ENCODE measurements at regions of chr22 and their contacts with region 1.

Region 1: DNA sequence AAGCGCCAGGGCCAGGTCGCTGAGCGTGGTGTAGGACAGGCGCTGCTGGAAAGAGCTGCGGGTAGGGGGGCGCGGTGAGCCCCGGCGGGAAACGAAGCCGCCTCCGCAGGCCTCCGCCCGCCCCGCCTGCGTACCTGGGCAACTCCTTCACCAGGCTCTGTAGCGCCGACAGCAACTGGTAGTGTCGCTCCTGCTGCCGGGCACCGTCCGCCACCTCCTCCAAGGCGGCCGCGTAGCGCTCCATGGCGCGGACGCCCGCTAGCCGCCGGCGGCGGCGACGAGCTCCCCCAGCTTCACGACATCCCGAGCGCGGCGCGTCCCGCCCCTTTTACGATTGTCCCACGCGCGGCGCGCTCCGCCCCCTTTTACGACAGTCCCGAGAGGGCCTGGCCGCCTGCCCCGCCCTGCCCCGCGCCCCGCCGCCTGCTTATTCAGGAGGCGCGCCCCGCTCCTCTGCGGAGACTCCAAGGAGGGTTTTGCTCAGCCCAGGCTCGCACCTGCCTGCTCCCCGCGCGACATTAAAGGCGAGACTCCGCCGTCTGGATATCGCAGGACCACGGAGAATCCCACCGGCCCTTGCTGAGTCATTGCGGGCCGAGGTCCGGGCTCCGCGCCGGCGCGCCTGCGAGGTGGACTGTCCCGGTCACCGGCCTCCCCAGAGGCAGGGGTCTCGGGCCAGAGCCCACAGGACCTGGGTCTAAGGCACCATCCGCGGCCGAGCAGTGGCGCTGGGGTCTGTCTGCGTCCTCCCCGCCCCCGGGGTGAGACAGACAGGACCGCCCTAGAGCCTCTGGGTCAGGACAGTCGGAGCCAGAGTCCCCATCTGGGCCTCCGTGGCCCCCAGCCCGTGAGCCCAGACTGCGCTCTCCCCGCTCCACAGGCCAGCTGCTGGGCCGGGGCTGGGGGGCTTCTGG is at the start of gene DGCR6L:
- DNase-seq: peak; percentile 97
- H3K4me3 ChIP-seq: peak within 1 kb of the TSS; percentile 79 to 96 (median 94)
- H3K27ac ChIP-seq: peak within 1 kb of the TSS; percentile 83 to 91 (median 85)
- H3K4me1 ChIP-seq: peaks cover 35 to 64% (median 48%) of the 10 kb centered on the region in 4 donors
- H3K27me3 ChIP-seq: no peaks in the 10 kb centered on the region
- CTCF ChIP-seq: no peak
- EP300 ChIP-seq: no peak
- POLR2A ChIP-seq: no peak
- total RNA-seq, gene DGCR6L: 41.5 to 73.0 (median 52.9) TPM

Region 2: GRCh38 chr22:20258584-20259326 is 61.2 kb before region 1 on chr22:
- intact Hi-C with region 1: no loop called
- DNase-seq: no peak
- H3K4me3 ChIP-seq: no peak overlapping the region
- H3K27ac ChIP-seq: no peak overlapping the region
- H3K4me1 ChIP-seq: no peaks in the 10 kb centered on the region
- H3K27me3 ChIP-seq: no peaks in the 10 kb centered on the region
- CTCF ChIP-seq: no peak
- EP300 ChIP-seq: no peak
- POLR2A ChIP-seq: no peak

Region 3: GRCh38 chr22:20393909-20394691 is 74.1 kb after region 1 on chr22 and contains the start of gene ZNF74:
- intact Hi-C with region 1: loop called (anchors 10 kb)
- DNase-seq: peak; percentile 95
- H3K4me3 ChIP-seq: peak within 1 kb of the TSS; percentile 85 to 94 (median 86)
- H3K27ac ChIP-seq: peak within 1 kb of the TSS; percentile 78 to 85 (median 79)
- H3K4me1 ChIP-seq: peaks cover 13 to 37% (median 28%) of the 10 kb centered on the region in 4 donors
- H3K27me3 ChIP-seq: no peaks in the 10 kb centered on the region
- CTCF ChIP-seq: peak in 1 of 3 experiments; percentile 26
- EP300 ChIP-seq: no peak
- POLR2A ChIP-seq: no peak
- total RNA-seq, gene ZNF74: 9.6 to 20.0 (median 15.0) TPM

Measured in esophagus muscularis mucosa (tissue), 4 donors.